ENCODE measurements at regions of chr2 and their contacts with region 1.

Region 1: GRCh38 chr2:20962939-20963557 is 80.8 kb downstream of the APOB start:
- DNase-seq: peak; percentile 70
- H3K4me3 ChIP-seq: no peak overlapping the region
- H3K27ac ChIP-seq: no peak overlapping the region
- H3K4me1 ChIP-seq: no peaks in the 10 kb centered on the region
- H3K27me3 ChIP-seq: no peaks in the 10 kb centered on the region
- CTCF ChIP-seq: peak; percentile 83

Region 2: GRCh38 chr2:20661981-20662937 is 300.8 kb before region 1 on chr2:
- intact Hi-C with region 1: loop called (anchors 2 kb)
- DNase-seq: no peak
- H3K4me3 ChIP-seq: no peak overlapping the region
- H3K27ac ChIP-seq: no peak overlapping the region
- H3K4me1 ChIP-seq: peaks cover 10% of the 10 kb centered on the region
- H3K27me3 ChIP-seq: peaks cover 51% of the 10 kb centered on the region
- CTCF ChIP-seq: no peak

Region 3: GRCh38 chr2:20682167-20682920 is 280.7 kb before region 1 on chr2:
- intact Hi-C with region 1: loop called (anchors 5 kb)
- DNase-seq: no peak
- H3K4me3 ChIP-seq: no peak overlapping the region
- H3K27ac ChIP-seq: no peak overlapping the region
- H3K4me1 ChIP-seq: no peaks in the 10 kb centered on the region
- H3K27me3 ChIP-seq: no peaks in the 10 kb centered on the region
- CTCF ChIP-seq: no peak

Region 4: DNA sequence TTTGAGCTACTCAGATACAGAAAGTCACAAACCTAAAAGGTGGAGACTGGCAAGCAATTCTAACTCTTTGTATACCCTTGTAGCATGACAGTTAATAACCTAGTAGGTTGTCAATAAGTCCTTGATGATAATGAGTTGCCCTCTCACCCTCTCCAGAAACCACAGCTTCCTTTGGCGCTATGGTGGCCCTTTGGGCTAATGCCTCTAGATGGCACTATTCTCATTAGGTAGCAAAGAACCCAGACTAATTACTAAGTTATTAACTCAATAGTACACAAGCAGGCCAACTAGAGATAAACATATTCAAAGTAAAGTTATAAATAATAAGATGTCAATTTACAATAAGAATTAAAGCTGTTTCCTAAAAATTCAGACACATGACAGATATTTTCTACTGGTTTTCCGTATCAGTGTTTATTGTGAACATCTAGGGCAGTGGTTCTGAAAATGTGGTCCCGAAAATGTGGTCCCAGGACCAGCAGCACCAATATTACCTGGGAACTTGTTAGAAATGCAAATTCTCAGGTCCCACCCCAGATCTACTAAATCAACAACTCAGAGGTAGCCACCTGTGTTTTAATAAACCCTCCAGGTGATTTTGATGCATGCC is 181.3 kb before region 1 on chr2:
- intact Hi-C with region 1: loop called (anchors 2 kb)
- DNase-seq: no peak
- H3K4me3 ChIP-seq: no peak overlapping the region
- H3K27ac ChIP-seq: no peak overlapping the region
- H3K4me1 ChIP-seq: no peaks in the 10 kb centered on the region
- H3K27me3 ChIP-seq: no peaks in the 10 kb centered on the region
- CTCF ChIP-seq: peak; percentile 42

Measured in colonic mucosa (tissue), 4 donors.